CD14-positive monocyte (primary cell): ENCODE measurements at regions of chr2 and their contacts with region 1.

Region 1: DNA sequence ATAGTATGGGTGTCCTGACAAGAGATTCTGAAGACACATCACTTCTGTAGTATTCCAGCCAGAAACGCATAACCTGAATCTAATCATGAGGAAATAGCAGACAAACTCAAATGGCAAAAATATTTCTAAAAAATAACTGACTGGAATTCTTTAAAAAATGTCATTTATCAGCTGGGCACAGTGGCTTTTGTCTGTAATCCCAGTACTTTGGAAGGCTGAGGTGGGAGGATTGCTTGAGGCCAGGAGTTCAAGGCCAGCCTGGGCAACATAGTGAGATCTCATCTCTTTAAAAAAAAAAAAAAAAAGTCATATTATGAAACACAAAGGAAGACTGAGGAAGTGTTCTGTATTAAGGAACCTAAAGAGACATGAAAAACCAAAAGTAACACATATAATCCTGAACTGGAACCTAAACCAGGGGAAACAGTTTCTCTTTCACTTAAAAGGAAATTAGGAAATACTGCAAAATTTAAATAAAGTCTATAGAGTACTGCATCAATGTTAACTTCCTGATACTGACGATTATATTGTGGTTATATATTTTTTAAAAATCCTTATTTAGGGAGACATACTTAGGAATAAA is 29.9 kb downstream of the SESTD1 start:
- DNase-seq: peak; percentile 67 to 88 (median 81)
- H3K4me3 ChIP-seq: peak overlapping the region; percentile 54 to 98 (median 75)
- H3K4me3 Mint-ChIP-seq: peak overlapping the region; percentile 60 to 87
- H3K27ac ChIP-seq: peak overlapping the region; percentile 61 to 82
- H3K27ac Mint-ChIP-seq: peak overlapping the region; percentile 82 to 94 (median 91)
- H3K4me1 ChIP-seq: peaks cover 24 to 44% of the 10 kb centered on the region in 2 donors
- H3K4me1 Mint-ChIP-seq: peaks cover 44% of the 10 kb centered on the region
- H3K27me3 ChIP-seq: no peaks in the 10 kb centered on the region
- H3K27me3 Mint-ChIP-seq: no peaks in the 10 kb centered on the region
- CTCF ChIP-seq: no peak

Region 2: DNA sequence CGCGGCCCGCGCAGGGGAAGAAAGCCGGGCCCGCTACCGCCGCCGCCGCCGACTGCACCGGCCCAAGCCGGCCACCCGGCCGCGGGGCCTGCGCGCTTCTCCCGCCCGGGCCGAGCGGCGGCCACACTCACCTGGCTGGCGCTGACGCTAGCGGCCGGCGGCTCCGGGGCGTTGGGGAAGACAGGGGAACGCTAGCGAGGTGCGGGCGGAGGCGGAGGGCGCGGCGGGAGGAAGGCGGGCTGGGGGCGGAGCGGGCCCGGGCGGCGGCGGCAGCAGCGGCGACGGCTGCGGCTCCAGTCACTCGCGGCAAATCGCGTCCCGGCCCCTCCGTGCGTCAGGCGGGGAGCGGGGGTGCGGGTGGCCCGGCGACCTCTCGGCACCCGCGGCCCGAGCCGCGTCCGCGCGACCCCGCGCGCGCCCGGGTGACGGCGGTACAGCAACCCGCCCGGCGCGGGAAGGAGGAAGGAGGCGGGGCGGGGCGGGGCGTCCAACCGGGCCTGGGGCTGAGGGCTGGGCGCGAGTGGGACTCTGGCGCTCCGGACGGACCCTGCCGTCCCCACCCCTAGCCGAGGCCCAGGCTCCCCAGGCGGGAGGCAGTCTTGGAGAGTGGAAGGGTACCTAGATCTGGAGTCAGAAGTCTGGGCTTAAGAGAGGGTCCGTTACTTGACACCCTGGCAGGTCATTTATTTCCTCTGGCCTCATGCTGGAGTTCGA is 29.8 kb after region 1 on chr2 and contains the start of gene SESTD1:
- intact Hi-C with region 1: loop called in 1 of 2 experiments (anchors 5 kb)
- DNase-seq: peak; percentile 62 to 74 (median 65)
- H3K4me3 ChIP-seq: peak within 1 kb of the TSS; percentile 60 to 92 (median 82)
- H3K4me3 Mint-ChIP-seq: peak within 1 kb of the TSS; percentile 94 to 95
- H3K27ac ChIP-seq: peak within 1 kb of the TSS; percentile 97 to 98
- H3K27ac Mint-ChIP-seq: peak within 1 kb of the TSS; percentile 99 to 100 (median 100)
- H3K4me1 ChIP-seq: peaks cover 31 to 53% of the 10 kb centered on the region in 2 donors
- H3K4me1 Mint-ChIP-seq: peaks cover 58% of the 10 kb centered on the region
- H3K27me3 ChIP-seq: no peaks in the 10 kb centered on the region
- H3K27me3 Mint-ChIP-seq: no peaks in the 10 kb centered on the region
- CTCF ChIP-seq: no peak
- polyA plus RNA-seq, gene SESTD1: 25.3 to 44.4 (median 25.3) TPM